ENCODE measurements at regions of chr12 and their contacts with region 1.

Region 1: DNA sequence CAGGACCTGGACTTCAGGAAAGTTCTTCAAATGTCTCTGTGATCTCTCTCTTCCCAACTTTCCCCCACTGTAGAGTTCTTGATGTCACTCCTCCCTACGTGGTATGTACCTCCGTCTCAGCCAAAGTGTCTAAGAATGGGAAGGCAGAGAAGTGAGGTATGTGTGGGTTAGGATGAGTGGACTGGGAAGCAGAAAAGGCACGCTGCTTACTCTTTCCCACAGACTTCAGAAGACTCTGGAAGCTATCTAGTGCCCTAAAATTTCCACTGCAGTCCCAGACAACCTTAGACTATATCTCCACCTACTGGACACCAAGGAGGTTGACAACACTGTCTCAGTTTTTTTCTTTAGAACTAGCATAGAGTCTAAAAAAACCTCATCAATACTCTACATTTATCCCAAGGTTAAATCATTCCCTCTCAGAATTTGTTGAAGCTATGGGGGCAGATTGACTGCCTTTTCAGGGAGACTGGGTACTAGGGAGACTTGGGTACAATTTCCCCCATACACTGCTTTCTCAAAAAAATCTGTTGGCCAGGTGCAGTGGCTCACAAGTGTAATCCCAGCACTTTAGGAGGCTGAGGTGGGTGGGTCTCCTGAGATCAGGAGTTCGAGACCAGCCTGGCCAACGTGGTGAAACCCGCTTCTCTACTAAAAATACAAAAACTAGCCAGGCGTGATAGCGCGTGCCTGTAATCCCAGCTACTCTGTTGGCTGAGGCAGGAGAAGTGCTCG is 20.6 kb upstream of the ITGA5 start:
- DNase-seq: peak; percentile 71
- ATAC-seq: peak; percentile 80
- H3K4me3 ChIP-seq: no peak overlapping the region
- H3K4me3 Mint-ChIP-seq: no peak overlapping the region
- H3K27ac ChIP-seq: no peak overlapping the region
- H3K27ac Mint-ChIP-seq: no peak overlapping the region
- H3K4me1 ChIP-seq: peaks cover 0 to 3% of the 10 kb centered on the region in 2 donors
- H3K4me1 Mint-ChIP-seq: peaks cover 2% of the 10 kb centered on the region
- H3K27me3 ChIP-seq: peaks cover 0 to 4% (median 0%) of the 10 kb centered on the region in 4 experiments
- H3K27me3 Mint-ChIP-seq: peaks cover 23% of the 10 kb centered on the region
- CTCF ChIP-seq: peak; percentile 89

Region 2: GRCh38 chr12:54379401-54380201 is 60.1 kb before region 1 on chr12:
- CTCF ChIA-PET with region 1: interaction called, 39 read pairs
- POLR2A ChIA-PET with region 1: no interaction called
- intact Hi-C with region 1: no loop called
- DNase-seq: peak; percentile 88
- ATAC-seq: peak; percentile 90
- H3K4me3 ChIP-seq: peak overlapping the region in 3 of 5 experiments; percentile 11 to 43 (median 40)
- H3K4me3 Mint-ChIP-seq: peak overlapping the region; percentile 77
- H3K27ac ChIP-seq: no peak overlapping the region
- H3K27ac Mint-ChIP-seq: peak overlapping the region; percentile 62
- H3K4me1 ChIP-seq: peaks cover 26 to 45% of the 10 kb centered on the region in 2 donors
- H3K4me1 Mint-ChIP-seq: peaks cover 35% of the 10 kb centered on the region
- H3K27me3 ChIP-seq: no peaks in the 10 kb centered on the region
- H3K27me3 Mint-ChIP-seq: no peaks in the 10 kb centered on the region
- CTCF ChIP-seq: peak; percentile 100

Region 3: DNA sequence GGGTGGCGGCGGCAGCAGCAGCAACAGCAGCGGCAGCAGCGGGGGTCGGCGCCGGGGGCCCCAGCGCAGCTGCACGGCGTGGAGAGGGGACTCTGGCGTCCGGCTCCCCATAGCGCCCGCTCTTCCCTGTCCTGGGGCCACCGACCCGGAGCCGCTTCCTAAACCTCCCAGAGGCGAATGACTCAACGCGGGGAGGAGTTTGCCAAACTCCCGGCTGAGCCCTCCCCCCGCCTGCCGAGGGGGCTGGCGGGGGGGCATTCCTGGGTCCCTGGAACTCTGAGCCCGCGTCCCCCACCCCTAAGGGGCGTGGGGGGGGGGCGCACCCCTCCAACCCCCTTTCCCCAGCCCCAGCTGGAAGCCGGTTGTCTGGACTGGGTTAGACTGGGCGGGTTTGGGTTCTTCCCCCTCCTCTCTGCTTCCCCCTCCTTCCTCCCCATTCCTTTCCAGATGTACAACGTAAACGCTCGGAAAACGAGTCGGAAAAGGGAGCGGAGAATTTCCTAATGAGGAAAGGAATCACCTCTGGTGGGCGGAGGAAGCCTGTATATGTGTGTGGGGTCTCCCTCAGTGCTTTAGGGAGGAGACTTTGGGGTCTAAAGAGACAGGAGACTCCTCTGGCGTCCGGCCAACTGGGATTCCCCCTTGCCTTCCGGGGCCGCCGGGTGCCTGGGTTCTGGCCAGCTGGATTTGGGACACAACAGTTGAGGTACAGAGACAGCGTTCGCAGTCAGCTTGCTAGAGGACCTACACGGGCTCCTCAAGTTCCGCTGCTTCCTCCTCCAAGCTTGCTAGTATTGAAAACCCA is 20.4 kb before region 1 on chr12 and contains the start of gene ITGA5:
- CTCF ChIA-PET with region 1: interaction called, 108 read pairs
- POLR2A ChIA-PET with region 1: no interaction called
- intact Hi-C with region 1: no loop called
- DNase-seq: peak; percentile 48
- ATAC-seq: peak; percentile 43
- H3K4me3 ChIP-seq: peak within 1 kb of the TSS; percentile 48 to 62 (median 57)
- H3K4me3 Mint-ChIP-seq: peak within 1 kb of the TSS; percentile 84
- H3K27ac ChIP-seq: peak within 1 kb of the TSS in 1 of 2 donors; percentile 62
- H3K27ac Mint-ChIP-seq: peak within 1 kb of the TSS; percentile 77
- H3K4me1 ChIP-seq: peaks cover 51 to 58% of the 10 kb centered on the region in 2 donors
- H3K4me1 Mint-ChIP-seq: peaks cover 49% of the 10 kb centered on the region
- H3K27me3 ChIP-seq: peaks cover 0 to 19% (median 8%) of the 10 kb centered on the region in 4 experiments
- H3K27me3 Mint-ChIP-seq: peaks cover 21% of the 10 kb centered on the region
- CTCF ChIP-seq: no peak
- total RNA-seq, gene ITGA5: 6.1 and 6.7 TPM in 2 replicates

Region 4: GRCh38 chr12:54428050-54429013 is 11.4 kb before region 1 on chr12:
- CTCF ChIA-PET with region 1: interaction called, 35 read pairs
- POLR2A ChIA-PET with region 1: no interaction called
- intact Hi-C with region 1: no loop called
- DNase-seq: no peak
- ATAC-seq: no peak
- H3K4me3 ChIP-seq: no peak overlapping the region
- H3K4me3 Mint-ChIP-seq: no peak overlapping the region
- H3K27ac ChIP-seq: no peak overlapping the region
- H3K27ac Mint-ChIP-seq: no peak overlapping the region
- H3K4me1 ChIP-seq: peaks cover 6% of the 10 kb centered on the region in 2 donors
- H3K4me1 Mint-ChIP-seq: peaks cover 16% of the 10 kb centered on the region
- H3K27me3 ChIP-seq: peaks cover 0 to 34% (median 4%) of the 10 kb centered on the region in 4 experiments
- H3K27me3 Mint-ChIP-seq: peaks cover 53% of the 10 kb centered on the region
- CTCF ChIP-seq: no peak

Region 5: GRCh38 chr12:54497883-54498282 is 58.2 kb after region 1 on chr12:
- CTCF ChIA-PET with region 1: interaction called, 12 read pairs
- POLR2A ChIA-PET with region 1: no interaction called
- intact Hi-C with region 1: no loop called
- DNase-seq: no peak
- ATAC-seq: peak; percentile 3
- H3K4me3 ChIP-seq: peak overlapping the region; percentile 76 to 97 (median 93)
- H3K4me3 Mint-ChIP-seq: peak overlapping the region; percentile 100
- H3K27ac ChIP-seq: peak overlapping the region; percentile 46 to 80
- H3K27ac Mint-ChIP-seq: peak overlapping the region; percentile 99
- H3K4me1 ChIP-seq: peaks cover 31 to 35% of the 10 kb centered on the region in 2 donors
- H3K4me1 Mint-ChIP-seq: peaks cover 46% of the 10 kb centered on the region
- H3K27me3 ChIP-seq: no peaks in the 10 kb centered on the region
- H3K27me3 Mint-ChIP-seq: no peaks in the 10 kb centered on the region
- CTCF ChIP-seq: no peak

Measured in B cell (primary cell).